ENCODE measurements at regions of chr3 and their contacts with region 1.

Region 1: GRCh38 chr3:41106691-41107286 is 92.5 kb upstream of the CTNNB1 start:
- DNase-seq: no peak
- H3K4me3 ChIP-seq: no peak overlapping the region
- H3K27ac ChIP-seq: no peak overlapping the region
- H3K4me1 ChIP-seq: no peaks in the 10 kb centered on the region
- H3K27me3 ChIP-seq: no peaks in the 10 kb centered on the region
- CTCF ChIP-seq: no peak
- POLR2A ChIP-seq: no peak

Region 2: GRCh38 chr3:41592753-41593510 is 486.1 kb after region 1 on chr3:
- intact Hi-C with region 1: loop called (anchors 5 kb)
- DNase-seq: no peak
- H3K4me3 ChIP-seq: no peak overlapping the region
- H3K27ac ChIP-seq: no peak overlapping the region
- H3K4me1 ChIP-seq: no peaks in the 10 kb centered on the region
- H3K27me3 ChIP-seq: no peaks in the 10 kb centered on the region
- CTCF ChIP-seq: no peak
- POLR2A ChIP-seq: no peak

Measured in vagina (tissue), 2 donors.